ENCODE measurements at regions of chr14 and their contacts with region 1.

Region 1: DNA sequence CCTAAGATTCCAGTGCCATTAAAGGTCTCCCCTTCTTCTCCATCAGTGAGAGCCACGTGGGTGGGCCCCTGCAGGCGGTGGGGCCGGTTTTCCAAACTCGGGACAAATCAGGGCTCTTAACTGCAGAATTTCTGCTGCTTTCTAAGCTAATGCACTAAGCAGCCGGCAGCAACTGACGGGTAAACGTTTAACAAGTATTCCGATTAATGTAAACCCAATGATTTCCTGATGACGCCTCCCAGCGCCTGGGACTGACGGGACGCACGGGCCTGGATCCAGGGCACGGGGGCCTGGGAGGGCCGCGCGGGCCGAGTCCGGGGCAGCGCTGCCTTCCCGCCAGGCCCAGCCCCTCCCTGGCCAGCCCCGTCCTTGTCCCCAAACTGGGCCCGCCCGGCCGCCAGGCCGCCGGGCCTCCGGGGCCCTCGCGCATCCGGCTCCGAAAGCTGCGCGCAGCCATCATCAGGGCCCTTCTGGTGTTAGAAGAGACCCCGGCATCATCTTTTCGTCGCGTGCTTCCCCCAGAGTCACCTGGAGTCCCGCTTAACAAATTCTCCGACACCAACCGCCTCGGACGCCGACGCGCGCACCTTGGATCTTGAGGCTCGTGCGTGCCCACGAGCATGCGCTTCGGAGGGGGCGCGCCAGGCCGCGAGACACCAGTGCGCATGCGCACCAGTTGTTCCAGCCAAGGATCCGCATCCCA is at the start of gene MLH3:
- DNase-seq: peak; percentile 87
- ATAC-seq: peak; percentile 66
- H3K4me3 Mint-ChIP-seq: peak within 1 kb of the TSS; percentile 88
- H3K27ac Mint-ChIP-seq: peak within 1 kb of the TSS; percentile 94
- H3K4me1 Mint-ChIP-seq: peaks cover 72% of the 10 kb centered on the region
- H3K27me3 Mint-ChIP-seq: no peaks in the 10 kb centered on the region
- total RNA-seq, gene MLH3: 28.1 to 30.8 TPM

Region 2: GRCh38 chr14:75063407-75064213 is 12.6 kb after region 1 on chr14 and contains the start of gene ACYP1:
- CTCF ChIA-PET with region 1: interaction called, 4 read pairs
- POLR2A ChIA-PET with region 1: no interaction called
- intact Hi-C with region 1: loop called in 1 of 2 experiments (anchors 1 kb)
- DNase-seq: peak; percentile 95
- ATAC-seq: peak; percentile 99
- H3K4me3 Mint-ChIP-seq: peak within 1 kb of the TSS; percentile 96
- H3K27ac Mint-ChIP-seq: peak within 1 kb of the TSS; percentile 93
- H3K4me1 Mint-ChIP-seq: peaks cover 27% of the 10 kb centered on the region
- H3K27me3 Mint-ChIP-seq: no peaks in the 10 kb centered on the region
- total RNA-seq, gene ACYP1: 37.0 to 40.2 TPM

Region 3: GRCh38 chr14:75497191-75497590 is 446.2 kb after region 1 on chr14:
- CTCF ChIA-PET with region 1: no interaction called
- POLR2A ChIA-PET with region 1: no interaction called
- intact Hi-C with region 1: no loop called
- DNase-seq: peak; percentile 66
- ATAC-seq: peak; percentile 73
- H3K4me3 Mint-ChIP-seq: peak overlapping the region; percentile 48
- H3K27ac Mint-ChIP-seq: peak overlapping the region; percentile 82
- H3K4me1 Mint-ChIP-seq: peaks cover 61% of the 10 kb centered on the region
- H3K27me3 Mint-ChIP-seq: no peaks in the 10 kb centered on the region